H1 (cell line): ENCODE measurements at regions of chrX and their contacts with region 1.

Region 1: GRCh38 chrX:84046403-84046984 is 141.5 kb downstream of the RPS6KA6 start:
- DNase-seq: peak in 1 of 2 experiments; percentile 46
- H3K4me3 ChIP-seq: no peak overlapping the region
- H3K27ac ChIP-seq: no peak overlapping the region
- H3K4me1 ChIP-seq: no peaks in the 10 kb centered on the region
- H3K27me3 ChIP-seq: no peaks in the 10 kb centered on the region
- CTCF ChIP-seq: peak; percentile 39 to 69 (median 66)
- EP300 ChIP-seq: no peak
- POLR2A ChIP-seq: no peak
- RAD21 ChIP-seq: peak; percentile 69

Region 2: DNA sequence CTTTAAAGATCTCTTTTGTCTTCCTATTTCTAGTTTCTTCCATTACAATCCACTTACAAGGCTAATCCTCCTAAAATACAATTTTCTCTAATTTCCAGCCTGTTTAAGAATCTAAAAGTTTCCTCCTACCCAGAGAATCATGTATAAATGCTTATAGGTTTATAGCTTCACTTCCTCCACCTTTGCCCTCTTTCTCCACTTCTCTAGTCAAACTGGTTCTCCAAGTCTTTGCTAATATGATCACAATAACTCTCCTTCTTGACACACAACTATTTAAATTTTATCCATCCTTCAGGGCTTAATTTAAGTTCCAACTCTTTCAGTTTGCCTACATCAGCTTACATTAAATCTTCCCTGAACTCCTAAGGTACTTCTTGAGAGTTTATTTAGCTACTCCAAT is 72.3 kb after region 1 on chrX:
- CTCF ChIA-PET with region 1: interaction called, 10 read pairs
- POLR2A ChIA-PET with region 1: no interaction called
- DNase-seq: no peak
- H3K4me3 ChIP-seq: no peak overlapping the region
- H3K27ac ChIP-seq: no peak overlapping the region
- H3K4me1 ChIP-seq: no peaks in the 10 kb centered on the region
- H3K27me3 ChIP-seq: no peaks in the 10 kb centered on the region
- CTCF ChIP-seq: no peak
- EP300 ChIP-seq: no peak
- POLR2A ChIP-seq: no peak
- RAD21 ChIP-seq: no peak